MCF 10A (cell line): ENCODE measurements at regions of chr9 and their contacts with region 1.

Region 1: DNA sequence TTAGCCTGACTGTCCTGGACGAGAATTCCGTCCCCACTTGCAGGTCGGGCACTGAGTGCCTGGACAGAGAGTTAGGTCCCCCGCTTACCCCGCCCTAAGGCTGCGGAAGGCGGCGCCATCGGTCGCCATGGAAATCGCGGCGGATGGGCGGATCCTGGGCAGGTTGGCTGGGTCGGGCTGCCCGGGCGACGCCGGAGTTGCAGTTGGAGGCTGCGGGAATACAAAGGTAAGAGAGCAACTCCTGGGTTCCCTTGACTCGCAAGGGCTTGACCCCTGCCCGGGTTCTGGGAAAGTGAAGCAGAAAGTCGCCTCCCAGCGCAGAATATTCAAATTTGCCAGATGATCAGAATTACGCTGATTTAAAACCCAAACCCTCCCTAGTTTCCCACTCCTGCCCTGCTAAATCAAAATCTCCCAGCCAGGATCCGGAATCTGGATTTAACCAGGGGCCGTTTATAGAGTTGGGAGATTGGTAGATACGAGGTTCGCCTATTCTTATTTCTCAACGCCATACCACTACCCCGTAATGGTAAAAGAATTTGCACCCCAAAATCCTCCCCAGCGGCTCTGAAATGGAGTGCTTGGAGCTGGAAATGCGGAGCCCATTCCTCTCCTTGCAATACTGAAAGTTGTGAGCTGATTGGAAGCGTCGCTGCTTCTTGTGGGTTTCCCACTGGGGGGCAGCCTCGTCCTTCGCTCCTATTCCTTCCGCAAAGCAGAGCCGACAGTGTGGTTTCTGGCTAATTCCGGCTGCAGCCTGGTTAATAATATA is 156.4 kb upstream of the RASEF start:
- DNase-seq: peak; percentile 82
- H3K4me3 Mint-ChIP-seq: peak overlapping the region; percentile 85
- H3K27ac Mint-ChIP-seq: peak overlapping the region; percentile 56
- H3K4me1 Mint-ChIP-seq: no peaks in the 10 kb centered on the region
- H3K27me3 Mint-ChIP-seq: no peaks in the 10 kb centered on the region
- CTCF ChIP-seq: peak; percentile 27

Region 2: GRCh38 chr9:83538172-83538889 is 319.0 kb after region 1 on chr9 and contains the start of gene FRMD3:
- CTCF ChIA-PET with region 1: interaction called, 11 read pairs
- POLR2A ChIA-PET with region 1: interaction called, 3 read pairs
- intact Hi-C with region 1: no loop called
- DNase-seq: peak; percentile 53
- H3K4me3 Mint-ChIP-seq: peak within 1 kb of the TSS; percentile 68
- H3K27ac Mint-ChIP-seq: no peak within 1 kb of the TSS
- H3K4me1 Mint-ChIP-seq: no peaks in the 10 kb centered on the region
- H3K27me3 Mint-ChIP-seq: peaks cover 11% of the 10 kb centered on the region
- CTCF ChIP-seq: peak; percentile 23
- total RNA-seq, gene FRMD3: 0.17 and 0.28 TPM in 2 replicates

Region 3: GRCh38 chr9:83649080-83649479 is 429.7 kb after region 1 on chr9:
- CTCF ChIA-PET with region 1: interaction called, 10 read pairs
- POLR2A ChIA-PET with region 1: no interaction called
- intact Hi-C with region 1: no loop called
- DNase-seq: peak; percentile 58
- H3K4me3 Mint-ChIP-seq: no peak overlapping the region
- H3K27ac Mint-ChIP-seq: no peak overlapping the region
- H3K4me1 Mint-ChIP-seq: no peaks in the 10 kb centered on the region
- H3K27me3 Mint-ChIP-seq: no peaks in the 10 kb centered on the region
- CTCF ChIP-seq: peak; percentile 62

Region 4: GRCh38 chr9:83733739-83734138 is 514.4 kb after region 1 on chr9:
- CTCF ChIA-PET with region 1: no interaction called
- POLR2A ChIA-PET with region 1: no interaction called
- intact Hi-C with region 1: no loop called
- DNase-seq: no peak
- H3K4me3 Mint-ChIP-seq: no peak overlapping the region
- H3K27ac Mint-ChIP-seq: no peak overlapping the region
- H3K4me1 Mint-ChIP-seq: no peaks in the 10 kb centered on the region
- H3K27me3 Mint-ChIP-seq: peaks cover 11% of the 10 kb centered on the region
- CTCF ChIP-seq: no peak